Left colon (tissue), 2 donors: ENCODE measurements at regions of chr18 and their contacts with region 1.

Region 1: GRCh38 chr18:3281456-3282400 is 19.8 kb downstream of the MYL12B start:
- DNase-seq: no peak
- ATAC-seq: peak; percentile 66

Region 2: DNA sequence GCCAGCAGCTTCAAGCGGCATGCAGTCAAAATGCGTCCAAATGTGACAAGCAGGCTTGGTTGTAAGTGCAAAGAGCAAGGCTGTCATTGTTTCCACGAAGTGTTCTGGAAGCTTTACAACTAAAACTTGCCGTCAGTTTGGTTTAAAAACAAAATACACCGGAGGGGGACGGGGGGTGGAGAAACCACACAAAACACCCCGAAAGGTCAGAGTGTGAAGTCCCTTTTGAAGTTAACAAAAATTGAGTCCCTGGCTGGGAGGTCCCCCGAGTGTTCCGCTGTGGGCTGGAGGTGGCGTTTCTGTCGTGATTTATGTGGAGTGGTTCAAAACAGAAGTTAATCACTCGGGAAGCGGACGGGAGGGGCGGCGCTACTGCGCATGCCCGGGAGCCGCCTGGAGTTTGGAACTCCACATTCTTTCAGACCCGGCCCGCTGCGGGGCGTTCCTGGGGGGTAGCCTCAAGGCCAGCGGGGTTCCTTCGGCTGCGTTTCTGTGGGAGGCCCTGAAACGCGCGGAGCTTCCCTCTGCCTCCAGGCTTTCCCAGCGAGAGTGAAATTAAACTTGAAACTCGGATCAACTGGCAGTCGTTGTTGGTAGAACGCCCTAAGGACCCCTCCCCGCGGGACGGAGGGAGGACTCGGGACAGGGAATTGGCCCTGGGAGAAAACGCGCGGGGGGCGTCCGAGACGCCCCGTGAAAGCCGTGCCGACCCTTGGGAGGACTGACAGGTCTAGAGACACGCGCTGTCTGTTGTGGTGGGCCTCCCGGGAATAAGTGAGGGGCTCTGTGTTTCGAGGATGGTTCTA is 169.7 kb after region 1 on chr18:
- intact Hi-C with region 1: loop called in 1 of 2 experiments (anchors 5 kb)
- DNase-seq: peak; percentile 93 to 95
- ATAC-seq: peak; percentile 40

Region 3: GRCh38 chr18:3585656-3586509 is 304.2 kb after region 1 on chr18:
- intact Hi-C with region 1: loop called in 1 of 2 experiments (anchors 5 kb)
- DNase-seq: peak; percentile 86 to 92
- ATAC-seq: peak; percentile 90

Region 4: GRCh38 chr18:3665780-3666525 is 384.2 kb after region 1 on chr18:
- intact Hi-C with region 1: loop called (anchors 2 to 10 kb)
- DNase-seq: peak; percentile 74 to 81
- ATAC-seq: peak; percentile 85

Region 5: DNA sequence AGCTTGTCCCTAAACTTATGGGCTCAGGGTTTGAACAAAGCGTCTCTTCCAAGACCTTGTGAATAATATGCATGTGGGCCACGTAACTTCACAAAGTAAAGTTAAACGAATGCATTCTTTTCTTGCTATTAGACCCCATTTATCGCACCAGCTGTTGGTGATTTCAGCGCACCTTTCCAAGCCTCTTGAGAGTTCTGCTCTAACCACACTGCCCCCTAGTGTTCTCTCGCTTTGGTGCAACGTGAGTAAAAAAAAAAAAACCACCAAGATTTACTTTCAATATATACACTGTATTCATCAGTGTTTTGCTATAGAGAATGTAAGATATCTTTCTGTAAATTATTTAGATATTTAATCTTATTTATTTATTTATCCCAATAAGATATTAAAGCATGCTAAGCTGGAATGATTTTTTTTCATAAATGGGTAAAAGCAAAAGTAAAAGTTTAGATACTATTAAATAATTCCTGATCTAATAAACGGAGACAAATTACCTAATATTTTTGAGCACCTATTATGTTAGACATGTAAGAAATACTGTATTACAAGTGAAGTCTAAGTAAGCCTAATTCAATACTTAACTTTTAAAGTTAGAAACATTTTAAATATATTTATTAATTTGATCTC is 713.9 kb after region 1 on chr18:
- intact Hi-C with region 1: loop called in 1 of 2 experiments (anchors 10 kb)
- DNase-seq: peak in 1 of 2 donors; percentile 62
- ATAC-seq: peak; percentile 60